ENCODE measurements at regions of chr7 and their contacts with region 1.

Region 1: GRCh38 chr7:77759294-77759889 is 38.8 kb downstream of the TMEM60 start:
- DNase-seq: no peak
- H3K4me3 ChIP-seq: no peak overlapping the region
- H3K27ac ChIP-seq: peak overlapping the region in 1 of 4 donors; percentile 30
- H3K4me1 ChIP-seq: peaks cover 0 to 35% (median 4%) of the 10 kb centered on the region in 3 donors
- H3K27me3 ChIP-seq: no peaks in the 10 kb centered on the region
- CTCF ChIP-seq: peak; percentile 70 to 86 (median 78)
- POLR2A ChIP-seq: no peak

Region 2: GRCh38 chr7:77651573-77652162 is 107.7 kb before region 1 on chr7:
- intact Hi-C with region 1: loop called (anchors 5 kb)
- DNase-seq: no peak
- H3K4me3 ChIP-seq: no peak overlapping the region
- H3K27ac ChIP-seq: no peak overlapping the region
- H3K4me1 ChIP-seq: no peaks in the 10 kb centered on the region
- H3K27me3 ChIP-seq: no peaks in the 10 kb centered on the region
- CTCF ChIP-seq: peak; percentile 47 to 75 (median 60)
- POLR2A ChIP-seq: no peak

Measured in esophagus squamous epithelium (tissue), 5 donors.